ENCODE measurements at regions of chr11 and their contacts with region 1.

Region 1: GRCh38 chr11:128039140-128040021 is 548.0 kb downstream of the ETS1 start:
- DNase-seq: peak; percentile 25 to 83 (median 74)
- ATAC-seq: peak; percentile 97
- H3K4me3 ChIP-seq: peak overlapping the region; percentile 38
- H3K4me3 Mint-ChIP-seq: peak overlapping the region in 9 of 10 donors; percentile 61 to 79 (median 70)
- H3K27ac ChIP-seq: peak overlapping the region; percentile 49
- H3K27ac Mint-ChIP-seq: peak overlapping the region in 8 of 9 donors; percentile 71 to 94 (median 90)
- H3K4me1 ChIP-seq: peaks cover 68 to 74% of the 10 kb centered on the region in 2 donors
- H3K4me1 Mint-ChIP-seq: peaks cover 25 to 56% (median 41%) of the 10 kb centered on the region in 7 donors
- H3K27me3 ChIP-seq: no peaks in the 10 kb centered on the region
- H3K27me3 Mint-ChIP-seq: peaks cover 0 to 3% (median 0%) of the 10 kb centered on the region in 5 donors

Region 2: GRCh38 chr11:128052912-128053641 is 13.7 kb after region 1 on chr11:
- CTCF ChIA-PET with region 1: interaction called, 15 read pairs
- POLR2A ChIA-PET with region 1: interaction called, 124 read pairs
- intact Hi-C with region 1: loop called (anchors 1 kb)
- DNase-seq: peak in 7 of 9 donors; percentile 21 to 66 (median 61)
- ATAC-seq: peak; percentile 60
- H3K4me3 ChIP-seq: peak overlapping the region; percentile 28
- H3K4me3 Mint-ChIP-seq: peak overlapping the region; percentile 54 to 90 (median 80)
- H3K27ac ChIP-seq: peak overlapping the region; percentile 68
- H3K27ac Mint-ChIP-seq: peak overlapping the region; percentile 82 to 95 (median 90)
- H3K4me1 ChIP-seq: peaks cover 63 to 64% of the 10 kb centered on the region in 2 donors
- H3K4me1 Mint-ChIP-seq: peaks cover 40 to 81% (median 78%) of the 10 kb centered on the region in 7 donors
- H3K27me3 ChIP-seq: no peaks in the 10 kb centered on the region
- H3K27me3 Mint-ChIP-seq: no peaks in the 10 kb centered on the region

Region 3: GRCh38 chr11:128342511-128343134 is 303.2 kb after region 1 on chr11:
- CTCF ChIA-PET with region 1: no interaction called
- POLR2A ChIA-PET with region 1: no interaction called
- intact Hi-C with region 1: loop called in 1 of 2 experiments (anchors 5 kb)
- DNase-seq: peak in 5 of 9 donors; percentile 46 to 77 (median 63)
- ATAC-seq: peak; percentile 54
- H3K4me3 ChIP-seq: peak overlapping the region; percentile 57
- H3K4me3 Mint-ChIP-seq: peak overlapping the region; percentile 74 to 90 (median 84)
- H3K27ac ChIP-seq: peak overlapping the region; percentile 93
- H3K27ac Mint-ChIP-seq: peak overlapping the region; percentile 97 to 99 (median 99)
- H3K4me1 ChIP-seq: peaks cover 50 to 64% of the 10 kb centered on the region in 2 donors
- H3K4me1 Mint-ChIP-seq: peaks cover 52 to 99% (median 94%) of the 10 kb centered on the region in 7 donors
- H3K27me3 ChIP-seq: no peaks in the 10 kb centered on the region
- H3K27me3 Mint-ChIP-seq: no peaks in the 10 kb centered on the region

Region 4: DNA sequence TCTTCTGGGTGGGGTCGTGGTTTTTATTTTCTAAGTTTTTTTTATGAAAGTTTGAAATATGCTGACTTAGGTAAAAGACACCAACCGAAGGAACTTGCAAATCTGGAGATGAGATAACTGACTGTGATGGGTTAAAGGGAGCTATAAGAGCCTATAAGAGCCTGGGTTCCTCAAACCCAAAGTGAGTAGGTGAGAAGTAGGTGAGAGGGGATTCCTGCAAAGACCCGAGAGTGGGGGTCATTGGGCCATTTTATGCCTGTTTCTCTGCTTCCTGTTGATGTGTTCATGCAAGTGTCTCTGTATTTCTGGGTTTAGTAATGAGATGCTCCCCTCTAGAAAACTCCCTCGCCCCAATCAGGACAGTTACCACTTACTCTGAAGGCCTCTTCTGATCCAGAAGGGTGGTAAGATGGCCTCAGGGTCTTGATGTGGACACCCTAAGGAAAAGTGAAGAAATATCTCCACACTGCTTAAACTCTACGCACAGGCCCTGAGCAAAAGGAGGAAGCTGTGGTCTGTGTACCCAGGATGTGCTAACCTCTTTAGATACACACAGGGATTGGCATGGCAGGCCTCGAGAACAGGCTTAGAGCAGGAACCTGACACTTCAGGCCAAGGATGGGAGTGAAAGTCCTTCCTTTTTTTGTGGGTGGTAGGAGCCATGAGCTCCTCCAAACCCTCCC is 656.3 kb after region 1 on chr11:
- CTCF ChIA-PET with region 1: no interaction called
- POLR2A ChIA-PET with region 1: no interaction called
- intact Hi-C with region 1: loop called in 1 of 2 experiments (anchors 5 kb)
- DNase-seq: peak in 7 of 9 donors; percentile 39 to 63 (median 52)
- ATAC-seq: peak; percentile 75
- H3K4me3 ChIP-seq: peak overlapping the region; percentile 82
- H3K4me3 Mint-ChIP-seq: peak overlapping the region; percentile 89 to 99 (median 96)
- H3K27ac ChIP-seq: peak overlapping the region; percentile 86
- H3K27ac Mint-ChIP-seq: peak overlapping the region; percentile 72 to 96 (median 94)
- H3K4me1 ChIP-seq: peaks cover 45 to 53% of the 10 kb centered on the region in 2 donors
- H3K4me1 Mint-ChIP-seq: peaks cover 53 to 75% (median 67%) of the 10 kb centered on the region in 7 donors
- H3K27me3 ChIP-seq: no peaks in the 10 kb centered on the region
- H3K27me3 Mint-ChIP-seq: peaks cover 0 to 22% (median 0%) of the 10 kb centered on the region in 5 donors

Region 5: DNA sequence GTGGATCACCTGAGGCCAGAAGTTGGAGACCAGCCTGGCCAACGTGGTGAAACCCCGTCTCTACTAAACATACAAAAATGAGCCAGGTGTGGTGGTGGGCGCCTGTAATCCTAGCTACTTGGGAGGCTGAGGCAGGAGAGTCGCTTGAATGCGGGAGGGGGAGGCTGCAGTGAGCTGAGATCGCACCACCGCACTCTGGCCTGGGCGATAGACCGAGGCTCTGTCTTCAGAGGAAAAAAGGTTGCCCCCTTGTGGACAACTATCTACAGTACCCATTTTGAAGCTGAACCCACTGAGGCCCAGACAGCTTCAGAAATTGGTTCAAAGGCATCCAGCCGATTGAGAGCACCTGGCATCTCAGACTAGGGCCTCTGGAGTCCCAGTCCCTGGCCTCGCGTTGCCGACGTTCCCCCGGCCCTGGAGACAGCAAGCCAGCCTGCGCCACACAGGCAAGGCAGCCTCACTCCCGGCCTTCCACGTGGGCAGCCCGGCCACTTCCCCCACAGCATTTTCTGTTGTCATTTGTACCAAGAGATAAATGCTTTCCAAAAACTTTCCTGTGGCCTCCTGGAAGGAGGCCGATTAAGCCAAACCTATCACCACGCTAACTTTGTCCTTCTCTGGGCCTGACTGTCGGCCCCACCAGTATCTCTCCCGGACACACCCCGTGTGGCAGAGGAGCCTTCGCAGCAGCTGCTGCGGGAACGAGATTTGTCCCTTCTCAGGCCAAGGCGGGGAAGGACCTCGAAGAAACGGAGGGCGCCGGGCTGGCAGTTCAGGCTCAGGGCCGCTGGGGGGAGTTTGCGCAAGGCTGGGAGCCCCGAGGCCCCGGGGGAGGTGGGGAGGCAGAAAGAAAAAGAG is 737.3 kb after region 1 on chr11:
- CTCF ChIA-PET with region 1: no interaction called
- POLR2A ChIA-PET with region 1: no interaction called
- intact Hi-C with region 1: loop called in 1 of 2 experiments (anchors 5 kb)
- DNase-seq: peak in 7 of 9 donors; percentile 12 to 44 (median 38)
- ATAC-seq: peak; percentile 80
- H3K4me3 ChIP-seq: no peak overlapping the region
- H3K4me3 Mint-ChIP-seq: no peak overlapping the region
- H3K27ac ChIP-seq: no peak overlapping the region
- H3K27ac Mint-ChIP-seq: peak overlapping the region in 6 of 9 donors; percentile 34 to 65 (median 58)
- H3K4me1 ChIP-seq: peaks cover 21 to 34% of the 10 kb centered on the region in 2 donors
- H3K4me1 Mint-ChIP-seq: peaks cover 46 to 89% (median 66%) of the 10 kb centered on the region in 7 donors
- H3K27me3 ChIP-seq: no peaks in the 10 kb centered on the region
- H3K27me3 Mint-ChIP-seq: no peaks in the 10 kb centered on the region

Region 6: DNA sequence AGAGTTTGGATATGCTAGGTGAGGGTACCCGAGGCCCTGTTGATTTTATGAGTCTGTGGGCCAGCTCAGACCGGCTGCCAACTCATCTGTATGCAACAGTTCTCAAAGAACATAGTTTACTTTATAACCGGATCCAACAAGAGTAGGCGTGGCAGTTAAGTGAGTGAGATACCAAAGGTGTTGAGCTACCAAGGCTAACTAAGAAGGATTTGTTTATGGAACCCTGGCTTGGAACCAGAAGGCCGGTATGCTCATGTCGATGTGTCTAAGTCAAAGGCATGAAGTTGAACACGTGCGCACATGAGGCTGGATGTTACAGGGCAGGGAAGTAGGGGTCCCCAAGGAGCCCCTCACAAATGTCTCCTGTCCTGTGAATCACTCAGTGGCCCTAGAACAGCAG is 827.9 kb after region 1 on chr11 and contains the start of gene KCNJ1:
- CTCF ChIA-PET with region 1: no interaction called
- POLR2A ChIA-PET with region 1: interaction called, 6 read pairs
- intact Hi-C with region 1: loop called in 1 of 2 experiments (anchors 2 kb)
- DNase-seq: peak in 5 of 9 donors; percentile 15 to 49 (median 35)
- ATAC-seq: no peak
- H3K4me3 ChIP-seq: no peak within 1 kb of the TSS
- H3K4me3 Mint-ChIP-seq: peak within 1 kb of the TSS in 1 of 10 donors; percentile 8
- H3K27ac ChIP-seq: no peak within 1 kb of the TSS
- H3K27ac Mint-ChIP-seq: no peak within 1 kb of the TSS
- H3K4me1 ChIP-seq: no peaks in the 10 kb centered on the region
- H3K4me1 Mint-ChIP-seq: no peaks in the 10 kb centered on the region
- H3K27me3 ChIP-seq: no peaks in the 10 kb centered on the region
- H3K27me3 Mint-ChIP-seq: peaks cover 0 to 22% (median 0%) of the 10 kb centered on the region in 5 donors
- total RNA-seq, gene KCNJ1: not detected

Measured in naive thymus-derived CD4-positive, alpha-beta T cell (primary cell).